Left cardiac atrium (tissue), 4 donors: ENCODE measurements at regions of chr6 and their contacts with region 1.

Region 1: DNA sequence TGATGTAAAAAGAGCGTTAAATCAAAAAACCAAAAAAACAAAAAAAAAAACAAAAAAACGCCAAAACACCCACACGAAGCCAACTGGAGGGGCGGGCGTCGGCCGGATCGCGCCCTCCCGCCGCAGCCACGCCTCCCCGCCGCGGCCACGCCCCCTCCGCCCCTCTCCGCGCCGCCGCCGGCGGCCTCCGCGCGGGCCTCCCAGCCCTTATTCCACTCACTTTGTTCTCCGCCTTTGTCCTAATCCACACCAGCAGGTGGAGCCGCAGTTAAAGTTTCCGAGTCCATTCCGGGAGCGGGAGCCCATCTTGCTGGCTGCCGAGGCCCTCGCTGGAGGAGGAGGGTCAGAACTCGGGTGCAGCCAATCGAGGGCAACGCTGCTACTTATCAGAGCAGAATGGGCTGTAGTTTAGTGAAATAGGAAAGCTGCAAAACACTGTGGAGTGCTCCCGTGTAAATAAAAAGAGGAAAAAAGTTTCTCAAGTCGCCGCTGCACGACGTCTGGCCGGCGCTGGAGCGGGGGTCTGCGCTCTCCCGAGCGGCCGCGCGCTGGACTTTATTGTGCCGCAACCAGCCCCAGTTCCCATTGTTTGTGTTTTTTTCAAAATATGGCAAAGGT is at the start of gene ASF1A:
- DNase-seq: peak; percentile 97
- ATAC-seq: peak; percentile 93 to 94
- total RNA-seq, gene ASF1A: 17.1 to 19.2 TPM

Region 2: GRCh38 chr6:118934461-118935330 is 40.8 kb after region 1 on chr6 and contains the start of gene MCM9:
- intact Hi-C with region 1: loop called in 1 of 2 experiments (anchors 2 kb)
- DNase-seq: peak; percentile 93
- ATAC-seq: peak; percentile 97 to 99
- total RNA-seq, gene MCM9: 6.3 to 8.6 TPM

Region 3: GRCh38 chr6:118952683-118953082 is 58.8 kb after region 1 on chr6:
- intact Hi-C with region 1: no loop called
- DNase-seq: no peak
- ATAC-seq: no peak